ENCODE measurements at regions of chr11 and their contacts with region 1.

Region 1: DNA sequence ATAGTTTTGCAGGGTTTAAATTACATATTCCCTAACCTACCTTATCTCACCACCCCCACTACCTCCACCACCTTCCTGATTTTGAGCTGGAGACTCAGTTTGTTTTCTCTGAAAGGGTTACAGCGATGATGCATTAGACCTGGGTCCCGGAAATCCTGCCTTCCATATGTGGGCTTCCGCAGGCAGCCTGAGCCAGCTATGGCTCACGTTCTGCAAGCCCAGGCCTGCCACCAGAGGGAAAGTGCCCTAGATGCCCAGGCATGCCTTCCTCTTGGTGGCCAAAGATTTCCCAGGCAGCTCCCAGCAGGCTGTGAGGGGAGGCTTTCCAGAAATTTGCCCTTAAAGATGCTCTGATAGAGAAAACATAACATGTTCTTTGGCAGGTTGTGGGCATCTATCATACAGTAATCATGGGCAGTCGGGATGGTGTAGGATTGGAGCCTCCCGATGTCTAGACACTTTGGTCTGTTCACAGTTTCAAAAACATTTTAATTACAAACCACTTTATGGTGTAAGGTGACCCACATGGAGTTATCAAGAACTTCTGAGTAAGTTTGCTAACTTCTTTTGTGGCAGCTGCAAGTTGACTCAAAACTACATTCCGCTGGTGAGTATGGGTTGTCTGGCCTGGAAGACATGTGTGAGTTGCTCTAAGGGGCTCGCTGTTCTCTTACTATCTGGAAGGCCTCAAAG is 79.3 kb downstream of the MICAL2 start:
- DNase-seq: no peak
- ATAC-seq: no peak
- H3K4me3 ChIP-seq: no peak overlapping the region
- H3K27ac ChIP-seq: no peak overlapping the region
- H3K4me1 ChIP-seq: peaks cover 16% of the 10 kb centered on the region
- H3K27me3 ChIP-seq: no peaks in the 10 kb centered on the region
- CTCF ChIP-seq: no peak
- EP300 ChIP-seq: no peak
- POLR2A ChIP-seq: no peak
- RAD21 ChIP-seq: no peak

Region 2: DNA sequence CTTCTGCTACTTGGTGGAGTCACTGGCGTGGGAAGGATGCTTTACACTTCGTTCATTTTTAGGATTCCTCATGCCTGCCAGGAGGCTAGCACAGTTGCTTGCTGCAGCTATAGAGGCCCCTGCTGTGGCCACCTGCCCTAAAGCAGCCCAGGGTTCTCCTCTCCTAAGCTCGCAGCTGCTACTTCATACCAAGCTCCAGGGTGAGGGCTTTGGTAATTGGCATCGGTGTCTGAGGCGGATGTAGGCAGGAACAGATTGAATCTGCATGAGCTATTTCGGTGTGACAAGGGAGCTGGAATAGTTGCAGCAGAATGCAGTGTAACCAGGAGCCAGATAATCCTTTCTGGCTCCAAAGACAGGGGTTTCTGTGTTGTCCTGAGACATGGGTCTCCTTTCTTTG is 53.8 kb after region 1 on chr11:
- CTCF ChIA-PET with region 1: no interaction called
- POLR2A ChIA-PET with region 1: no interaction called
- RAD21 ChIA-PET with region 1: no interaction called
- SMC1A ChIA-PET with region 1: no interaction called
- in situ Hi-C with region 1: loop called (anchors 5 kb)
- intact Hi-C with region 1: no loop called
- DNase-seq: no peak
- ATAC-seq: no peak
- H3K4me3 ChIP-seq: no peak overlapping the region
- H3K27ac ChIP-seq: no peak overlapping the region
- H3K4me1 ChIP-seq: no peaks in the 10 kb centered on the region
- H3K27me3 ChIP-seq: no peaks in the 10 kb centered on the region; a peak in 2 of 4 replicates
- CTCF ChIP-seq: no peak
- EP300 ChIP-seq: no peak
- POLR2A ChIP-seq: no peak
- RAD21 ChIP-seq: no peak

Region 3: GRCh38 chr11:12989428-12990161 is 799.9 kb after region 1 on chr11:
- CTCF ChIA-PET with region 1: no interaction called
- POLR2A ChIA-PET with region 1: no interaction called
- RAD21 ChIA-PET with region 1: no interaction called
- SMC1A ChIA-PET with region 1: no interaction called
- in situ Hi-C with region 1: no loop called
- intact Hi-C with region 1: no loop called
- DNase-seq: no peak
- ATAC-seq: peak; percentile 27; the same call in 2 of the 3 replicates
- H3K4me3 ChIP-seq: no peak overlapping the region
- H3K27ac ChIP-seq: no peak overlapping the region
- H3K4me1 ChIP-seq: no peaks in the 10 kb centered on the region
- H3K27me3 ChIP-seq: no peaks in the 10 kb centered on the region
- CTCF ChIP-seq: no peak
- EP300 ChIP-seq: no peak
- POLR2A ChIP-seq: no peak
- RAD21 ChIP-seq: no peak